ENCODE measurements at regions of chr14 and their contacts with region 1.

Region 1: GRCh38 chr14:100140452-100141078 is 18.9 kb downstream of the DEGS2 start:
- DNase-seq: peak; percentile 67 to 84 (median 78)
- H3K4me3 ChIP-seq: no peak overlapping the region
- H3K27ac ChIP-seq: peak overlapping the region in 1 of 2 experiments; percentile 76
- H3K4me1 ChIP-seq: peaks cover 0 to 39% (median 32%) of the 10 kb centered on the region in 4 experiments
- H3K27me3 ChIP-seq: no peaks in the 10 kb centered on the region

Region 2: GRCh38 chr14:100129161-100129681 is 11.3 kb before region 1 on chr14:
- CTCF ChIA-PET with region 1: interaction called, 16 read pairs
- POLR2A ChIA-PET with region 1: interaction called, 4 read pairs
- DNase-seq: no peak
- H3K4me3 ChIP-seq: no peak overlapping the region
- H3K27ac ChIP-seq: no peak overlapping the region
- H3K4me1 ChIP-seq: no peaks in the 10 kb centered on the region
- H3K27me3 ChIP-seq: no peaks in the 10 kb centered on the region

Region 3: DNA sequence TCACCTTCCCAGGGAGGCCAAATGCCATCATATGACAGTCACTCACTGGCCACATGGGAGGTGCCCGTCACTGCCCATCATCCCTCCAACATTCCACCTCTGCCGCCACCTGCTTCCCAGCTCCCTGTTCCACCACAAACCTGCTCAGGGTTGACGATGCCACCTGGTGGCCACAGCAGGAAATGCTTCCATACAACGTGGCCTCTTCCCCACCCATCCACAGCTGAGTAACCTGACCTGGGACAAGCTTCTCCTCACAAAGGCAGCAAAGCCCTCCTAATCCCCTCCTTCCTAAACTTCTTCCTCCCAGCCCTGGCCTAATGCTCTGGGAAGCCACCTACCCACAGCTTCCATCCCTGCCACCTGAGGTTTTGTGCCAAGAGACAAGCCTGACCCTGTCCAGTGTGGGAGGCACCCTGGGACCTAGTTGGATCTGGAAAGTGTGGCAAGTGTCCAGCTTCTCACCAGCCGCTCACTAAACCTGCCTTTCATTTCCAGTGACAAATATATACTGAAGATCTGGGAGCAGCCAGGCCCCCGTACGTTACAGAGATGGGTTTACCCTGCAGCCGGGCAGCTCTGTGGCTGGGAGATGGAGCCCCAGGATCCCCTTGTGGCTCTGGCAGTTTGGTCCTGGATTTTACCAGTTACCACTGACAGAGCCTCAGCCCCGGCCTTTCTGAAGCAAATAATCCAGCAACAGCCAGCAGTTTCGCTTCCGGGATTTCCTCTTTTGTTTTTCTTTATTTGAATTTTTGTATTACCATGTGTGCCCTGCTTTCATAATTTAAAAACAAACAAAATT is 14.7 kb after region 1 on chr14:
- CTCF ChIA-PET with region 1: interaction called, 25 read pairs
- POLR2A ChIA-PET with region 1: interaction called, 4 read pairs
- DNase-seq: peak; percentile 42 to 62 (median 51)
- H3K4me3 ChIP-seq: no peak overlapping the region
- H3K27ac ChIP-seq: no peak overlapping the region
- H3K4me1 ChIP-seq: peaks cover 0 to 17% (median 13%) of the 10 kb centered on the region in 4 experiments
- H3K27me3 ChIP-seq: peaks cover 0 to 22% (median 7%) of the 10 kb centered on the region in 5 experiments

Measured in common myeloid progenitor, CD34-positive (primary cell).